ENCODE measurements at regions of chr5 and their contacts with region 1.

Region 1: GRCh38 chr5:171630027-171630669 is 155.5 kb upstream of the SMIM23 start:
- DNase-seq: peak; percentile 52
- ATAC-seq: peak; percentile 99
- H3K4me3 ChIP-seq: no peak overlapping the region
- H3K27ac ChIP-seq: no peak overlapping the region
- H3K4me1 ChIP-seq: no peaks in the 10 kb centered on the region
- H3K27me3 ChIP-seq: peaks cover 51% of the 10 kb centered on the region
- CTCF ChIP-seq: peak; percentile 63
- POLR2A ChIP-seq: no peak
- RAD21 ChIP-seq: peak; percentile 73

Region 2: GRCh38 chr5:171850324-171851285 is 220.5 kb after region 1 on chr5:
- CTCF ChIA-PET with region 1: no interaction called
- POLR2A ChIA-PET with region 1: no interaction called
- dilution Hi-C with region 1: no loop called
- in situ Hi-C with region 1: no loop called
- intact Hi-C with region 1: loop called (anchors 5 kb)
- DNase-seq: no peak
- ATAC-seq: peak; percentile 51
- H3K4me3 ChIP-seq: no peak overlapping the region
- H3K27ac ChIP-seq: no peak overlapping the region
- H3K4me1 ChIP-seq: no peaks in the 10 kb centered on the region
- H3K27me3 ChIP-seq: no peaks in the 10 kb centered on the region
- CTCF ChIP-seq: 0 out of 2 replicates have a peak, but pooled peaks have one; percentile 16
- POLR2A ChIP-seq: no peak
- RAD21 ChIP-seq: peak; percentile 35

Region 3: GRCh38 chr5:172044631-172045314 is 414.6 kb after region 1 on chr5:
- CTCF ChIA-PET with region 1: no interaction called
- POLR2A ChIA-PET with region 1: no interaction called
- dilution Hi-C with region 1: no loop called
- in situ Hi-C with region 1: no loop called
- intact Hi-C with region 1: loop called (anchors 5 kb)
- DNase-seq: no peak
- ATAC-seq: no peak
- H3K4me3 ChIP-seq: no peak overlapping the region
- H3K27ac ChIP-seq: no peak overlapping the region
- H3K4me1 ChIP-seq: no peaks in the 10 kb centered on the region
- H3K27me3 ChIP-seq: no peaks in the 10 kb centered on the region
- CTCF ChIP-seq: no peak
- POLR2A ChIP-seq: no peak
- RAD21 ChIP-seq: no peak

Region 4: GRCh38 chr5:172303572-172304335 is 673.6 kb after region 1 on chr5:
- CTCF ChIA-PET with region 1: no interaction called
- POLR2A ChIA-PET with region 1: interaction called, 10 read pairs
- dilution Hi-C with region 1: no loop called
- in situ Hi-C with region 1: no loop called
- intact Hi-C with region 1: no loop called
- DNase-seq: no peak
- ATAC-seq: peak; percentile 35; the same call in 1 of the 2 replicates
- H3K4me3 ChIP-seq: no peak overlapping the region
- H3K27ac ChIP-seq: no peak overlapping the region
- H3K4me1 ChIP-seq: peaks cover 2% of the 10 kb centered on the region; the same call in 1 of the 2 replicates
- H3K27me3 ChIP-seq: no peaks in the 10 kb centered on the region
- CTCF ChIP-seq: no peak
- POLR2A ChIP-seq: peak; percentile 23; the same call in 1 of the 2 replicates
- RAD21 ChIP-seq: no peak

Measured in IMR-90 (cell line).